ENCODE measurements at regions of chr2 and their contacts with region 1.

Region 1: DNA sequence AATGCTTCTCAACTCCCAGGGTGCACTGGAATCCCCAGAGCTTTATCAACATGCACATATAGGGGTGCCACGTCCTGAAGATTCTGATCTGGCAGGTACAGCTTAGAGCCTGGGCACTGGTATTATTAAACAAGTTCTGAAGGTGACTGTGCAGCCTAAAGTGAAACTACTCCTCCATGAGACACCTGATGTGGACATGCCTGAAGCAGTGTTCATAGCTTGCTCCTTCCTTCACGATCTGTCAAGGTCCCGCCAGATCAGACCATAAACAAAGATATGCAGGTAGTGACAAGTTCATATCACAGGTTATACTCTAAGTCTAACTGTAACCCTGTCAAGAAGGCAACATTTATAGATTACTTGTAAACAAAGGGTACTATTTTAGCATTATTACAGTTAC is 65.3 kb upstream of the DNER start:
- DNase-seq: no peak
- H3K4me3 ChIP-seq: no peak overlapping the region
- H3K4me3 Mint-ChIP-seq: no peak overlapping the region
- H3K27ac Mint-ChIP-seq: no peak overlapping the region
- H3K4me1 ChIP-seq: no peaks in the 10 kb centered on the region
- H3K4me1 Mint-ChIP-seq: peaks cover 6% of the 10 kb centered on the region
- H3K27me3 ChIP-seq: no peaks in the 10 kb centered on the region
- H3K27me3 Mint-ChIP-seq: no peaks in the 10 kb centered on the region
- CTCF ChIP-seq: no peak

Region 2: GRCh38 chr2:229749779-229750178 is 29.9 kb before region 1 on chr2:
- CTCF ChIA-PET with region 1: no interaction called
- POLR2A ChIA-PET with region 1: interaction called, 10 read pairs
- intact Hi-C with region 1: no loop called
- DNase-seq: no peak
- H3K4me3 ChIP-seq: no peak overlapping the region
- H3K4me3 Mint-ChIP-seq: no peak overlapping the region
- H3K27ac Mint-ChIP-seq: no peak overlapping the region
- H3K4me1 ChIP-seq: no peaks in the 10 kb centered on the region
- H3K4me1 Mint-ChIP-seq: no peaks in the 10 kb centered on the region
- H3K27me3 ChIP-seq: no peaks in the 10 kb centered on the region
- H3K27me3 Mint-ChIP-seq: no peaks in the 10 kb centered on the region
- CTCF ChIP-seq: no peak

Region 3: GRCh38 chr2:229825476-229825875 is 45.8 kb after region 1 on chr2:
- CTCF ChIA-PET with region 1: no interaction called
- POLR2A ChIA-PET with region 1: no interaction called
- intact Hi-C with region 1: no loop called
- DNase-seq: no peak
- H3K4me3 ChIP-seq: no peak overlapping the region
- H3K4me3 Mint-ChIP-seq: no peak overlapping the region
- H3K27ac Mint-ChIP-seq: no peak overlapping the region
- H3K4me1 ChIP-seq: no peaks in the 10 kb centered on the region
- H3K4me1 Mint-ChIP-seq: no peaks in the 10 kb centered on the region
- H3K27me3 ChIP-seq: no peaks in the 10 kb centered on the region
- H3K27me3 Mint-ChIP-seq: no peaks in the 10 kb centered on the region
- CTCF ChIP-seq: no peak

Measured in Caco-2 (cell line).